ENCODE measurements at regions of chr9 and their contacts with region 1.

Region 1: DNA sequence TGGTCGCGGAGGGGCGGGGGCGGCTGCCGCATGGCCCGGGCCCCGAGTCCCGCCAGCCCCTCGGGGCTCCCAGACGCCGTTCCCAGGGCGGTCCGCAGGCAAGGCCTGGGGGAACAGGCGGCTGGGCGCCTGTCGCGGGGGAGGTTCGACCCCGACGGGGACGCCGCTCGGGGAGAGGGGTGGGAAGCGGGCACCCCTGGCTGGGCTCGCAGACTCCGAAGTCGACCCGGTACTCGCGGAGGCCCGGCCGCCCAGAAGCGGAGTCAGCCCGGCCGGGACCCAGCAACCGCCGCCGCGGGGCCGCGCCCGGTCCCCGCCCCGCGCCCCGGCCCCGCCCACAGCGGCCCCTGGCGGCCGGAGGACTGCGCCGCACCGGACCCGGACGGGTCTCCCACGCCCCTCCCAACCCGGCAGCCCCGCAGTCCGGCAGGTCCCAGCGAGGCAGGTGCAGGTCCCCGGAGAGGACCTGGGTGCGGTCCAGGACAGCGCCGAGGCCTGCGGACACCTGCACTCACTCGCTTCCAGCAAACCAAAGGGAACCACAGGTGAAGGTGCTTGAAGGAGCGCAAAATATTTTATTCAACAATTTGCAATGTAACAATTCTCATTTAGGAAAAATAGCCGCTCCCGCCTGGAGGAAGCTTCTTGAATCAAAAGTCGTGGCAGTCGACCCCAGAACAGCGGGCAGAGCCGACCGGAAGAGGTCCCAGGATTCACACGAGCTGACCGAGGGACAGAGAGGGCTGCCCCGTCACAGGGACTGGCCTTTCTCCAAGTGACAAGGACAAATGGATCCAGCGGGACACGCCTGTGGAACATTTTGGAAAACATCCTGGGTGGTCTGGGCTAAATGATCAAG is at the start of gene INPP5E:
- DNase-seq: peak; percentile 68 to 99 (median 84)
- ATAC-seq: peak; percentile 93
- H3K4me3 ChIP-seq: peak within 1 kb of the TSS; percentile 64
- H3K4me3 Mint-ChIP-seq: peak within 1 kb of the TSS; percentile 79 to 90 (median 85)
- H3K27ac ChIP-seq: peak within 1 kb of the TSS; percentile 84
- H3K27ac Mint-ChIP-seq: peak within 1 kb of the TSS in 8 of 9 donors; percentile 30 to 85 (median 70)
- H3K4me1 ChIP-seq: peaks cover 21% of the 10 kb centered on the region in 2 donors
- H3K4me1 Mint-ChIP-seq: peaks cover 20 to 29% (median 26%) of the 10 kb centered on the region in 7 donors
- H3K27me3 ChIP-seq: no peaks in the 10 kb centered on the region
- H3K27me3 Mint-ChIP-seq: no peaks in the 10 kb centered on the region
- total RNA-seq, gene INPP5E: 15.7 to 23.8 (median 22.6) TPM

Region 2: GRCh38 chr9:136410500-136411287 is 29.1 kb before region 1 on chr9 and contains the starts of genes ENTR1 and PMPCA:
- CTCF ChIA-PET with region 1: interaction called, 3 read pairs
- POLR2A ChIA-PET with region 1: interaction called, 7 read pairs
- intact Hi-C with region 1: loop called (anchors 1 to 2 kb)
- DNase-seq: peak; percentile 90 to 99 (median 93)
- ATAC-seq: peak; percentile 94
- H3K4me3 ChIP-seq: peak within 1 kb of the TSS; percentile 96
- H3K4me3 Mint-ChIP-seq: peak within 1 kb of the TSS; percentile 83 to 93 (median 90)
- H3K27ac ChIP-seq: peak within 1 kb of the TSS; percentile 97
- H3K27ac Mint-ChIP-seq: peak within 1 kb of the TSS; percentile 78 to 95 (median 90)
- H3K4me1 ChIP-seq: peaks cover 18 to 26% of the 10 kb centered on the region in 2 donors
- H3K4me1 Mint-ChIP-seq: peaks cover 34 to 56% (median 45%) of the 10 kb centered on the region in 7 donors
- H3K27me3 ChIP-seq: no peaks in the 10 kb centered on the region
- H3K27me3 Mint-ChIP-seq: no peaks in the 10 kb centered on the region
- total RNA-seq, gene ENTR1: 56.3 to 89.0 (median 66.6) TPM
- total RNA-seq, gene PMPCA: 60.5 to 86.3 (median 71.6) TPM

Region 3: GRCh38 chr9:136489731-136490130 is 50.0 kb after region 1 on chr9:
- CTCF ChIA-PET with region 1: no interaction called
- POLR2A ChIA-PET with region 1: no interaction called
- intact Hi-C with region 1: no loop called
- DNase-seq: no peak
- ATAC-seq: no peak
- H3K4me3 ChIP-seq: no peak overlapping the region
- H3K4me3 Mint-ChIP-seq: no peak overlapping the region
- H3K27ac ChIP-seq: no peak overlapping the region
- H3K27ac Mint-ChIP-seq: no peak overlapping the region
- H3K4me1 ChIP-seq: peaks cover 3% of the 10 kb centered on the region in 2 donors
- H3K4me1 Mint-ChIP-seq: peaks cover 3 to 6% (median 5%) of the 10 kb centered on the region in 7 donors
- H3K27me3 ChIP-seq: no peaks in the 10 kb centered on the region
- H3K27me3 Mint-ChIP-seq: no peaks in the 10 kb centered on the region

Measured in naive thymus-derived CD4-positive, alpha-beta T cell (primary cell).